CD4-positive, alpha-beta memory T cell (primary cell): ENCODE measurements at regions of chr14 and their contacts with region 1.

Region 1: GRCh38 chr14:56117765-56118610 is at the start of gene PELI2:
- DNase-seq: peak; percentile 86 to 91 (median 90)
- H3K4me3 ChIP-seq: peak within 1 kb of the TSS; percentile 45 to 72
- H3K4me3 Mint-ChIP-seq: peak within 1 kb of the TSS; percentile 94 to 99 (median 95)
- H3K27ac ChIP-seq: peak within 1 kb of the TSS; percentile 81
- H3K27ac Mint-ChIP-seq: peak within 1 kb of the TSS; percentile 97 to 99 (median 99)
- H3K4me1 ChIP-seq: peaks cover 39% of the 10 kb centered on the region
- H3K4me1 Mint-ChIP-seq: peaks cover 36 to 56% (median 43%) of the 10 kb centered on the region in 4 donors
- H3K27me3 ChIP-seq: no peaks in the 10 kb centered on the region
- H3K27me3 Mint-ChIP-seq: peaks cover 3 to 4% of the 10 kb centered on the region in 2 donors
- total RNA-seq, gene PELI2: 13.6 to 16.4 TPM

Region 2: GRCh38 chr14:55430024-55430690 is 687.8 kb before region 1 on chr14:
- CTCF ChIA-PET with region 1: no interaction called
- POLR2A ChIA-PET with region 1: no interaction called
- intact Hi-C with region 1: loop called (anchors 10 kb)
- DNase-seq: peak; percentile 65 to 79 (median 73)
- H3K4me3 ChIP-seq: no peak overlapping the region
- H3K4me3 Mint-ChIP-seq: peak overlapping the region in 1 of 8 donors; percentile 43
- H3K27ac ChIP-seq: no peak overlapping the region
- H3K27ac Mint-ChIP-seq: peak overlapping the region in 6 of 7 donors; percentile 39 to 91 (median 72)
- H3K4me1 ChIP-seq: peaks cover 32% of the 10 kb centered on the region
- H3K4me1 Mint-ChIP-seq: peaks cover 32 to 40% (median 34%) of the 10 kb centered on the region in 4 donors
- H3K27me3 ChIP-seq: no peaks in the 10 kb centered on the region
- H3K27me3 Mint-ChIP-seq: no peaks in the 10 kb centered on the region

Region 3: DNA sequence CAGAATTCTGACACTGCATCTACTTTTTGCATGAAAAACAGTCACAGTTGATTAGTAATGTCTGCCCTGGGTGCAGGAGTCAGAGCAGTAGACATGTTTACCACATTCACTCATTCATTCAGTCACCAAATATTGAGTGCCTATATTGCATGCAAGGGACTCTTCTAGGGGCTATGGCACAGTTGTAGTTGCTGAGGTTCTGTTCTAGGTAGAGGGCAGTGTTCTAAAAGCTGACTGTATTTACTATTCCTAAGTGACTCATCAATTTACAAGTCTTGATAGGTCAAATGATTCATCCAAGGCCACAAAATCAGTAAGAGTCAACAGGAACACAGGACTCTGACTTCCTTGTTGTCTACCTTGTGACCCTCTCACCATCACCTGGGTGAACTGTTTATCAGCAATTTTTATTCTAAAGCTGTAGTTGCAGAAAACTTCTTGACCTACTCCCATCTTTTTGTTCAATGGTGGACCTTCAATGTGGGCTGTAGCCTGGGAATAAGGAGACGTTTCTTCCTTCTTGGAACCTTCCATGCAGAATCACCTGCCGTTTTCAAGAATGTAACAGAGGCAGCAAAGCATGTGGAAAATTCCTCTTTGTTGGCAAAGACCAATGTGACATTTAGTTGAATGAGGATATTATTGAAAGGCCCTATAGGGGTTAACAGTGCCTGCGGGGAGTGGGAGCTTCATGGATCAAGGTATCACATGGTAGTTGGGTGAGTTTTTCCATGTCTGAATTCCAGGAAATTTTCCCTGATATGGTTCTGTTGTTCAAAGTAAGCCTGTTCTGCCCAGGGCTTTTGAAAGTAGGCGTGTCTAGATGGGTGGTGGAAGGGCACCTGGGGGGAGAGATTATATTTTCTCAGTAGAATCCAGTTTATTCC is 314.8 kb before region 1 on chr14:
- CTCF ChIA-PET with region 1: no interaction called
- POLR2A ChIA-PET with region 1: interaction called, 4 read pairs
- intact Hi-C with region 1: loop called (anchors 2 kb)
- DNase-seq: no peak
- H3K4me3 ChIP-seq: no peak overlapping the region
- H3K4me3 Mint-ChIP-seq: no peak overlapping the region
- H3K27ac ChIP-seq: no peak overlapping the region
- H3K27ac Mint-ChIP-seq: peak overlapping the region in 2 of 7 donors; percentile 57 to 65
- H3K4me1 ChIP-seq: peaks cover 50% of the 10 kb centered on the region
- H3K4me1 Mint-ChIP-seq: peaks cover 29 to 55% (median 46%) of the 10 kb centered on the region in 4 donors
- H3K27me3 ChIP-seq: no peaks in the 10 kb centered on the region
- H3K27me3 Mint-ChIP-seq: no peaks in the 10 kb centered on the region

Region 4: GRCh38 chr14:56004786-56005185 is 113.2 kb before region 1 on chr14:
- CTCF ChIA-PET with region 1: no interaction called
- POLR2A ChIA-PET with region 1: interaction called, 4 read pairs
- intact Hi-C with region 1: loop called (anchors 1 kb)
- DNase-seq: peak; percentile 29 to 51 (median 37)
- H3K4me3 ChIP-seq: no peak overlapping the region
- H3K4me3 Mint-ChIP-seq: peak overlapping the region in 7 of 8 donors; percentile 57 to 82 (median 63)
- H3K27ac ChIP-seq: no peak overlapping the region
- H3K27ac Mint-ChIP-seq: peak overlapping the region in 4 of 7 donors; percentile 10 to 87 (median 54)
- H3K4me1 ChIP-seq: peaks cover 35% of the 10 kb centered on the region
- H3K4me1 Mint-ChIP-seq: peaks cover 13 to 36% (median 25%) of the 10 kb centered on the region in 4 donors
- H3K27me3 ChIP-seq: peaks cover 3% of the 10 kb centered on the region
- H3K27me3 Mint-ChIP-seq: peaks cover 21 to 26% of the 10 kb centered on the region in 2 donors

Region 5: GRCh38 chr14:56579345-56580220 is 461.6 kb after region 1 on chr14 and contains the start of gene TMEM260:
- CTCF ChIA-PET with region 1: no interaction called
- POLR2A ChIA-PET with region 1: no interaction called
- intact Hi-C with region 1: loop called (anchors 5 kb)
- DNase-seq: peak; percentile 90 to 94 (median 93)
- H3K4me3 ChIP-seq: peak within 1 kb of the TSS; percentile 92 to 94
- H3K4me3 Mint-ChIP-seq: peak within 1 kb of the TSS; percentile 90 to 99 (median 92)
- H3K27ac ChIP-seq: peak within 1 kb of the TSS; percentile 83
- H3K27ac Mint-ChIP-seq: peak within 1 kb of the TSS in 6 of 7 donors; percentile 91 to 99 (median 97)
- H3K4me1 ChIP-seq: peaks cover 41% of the 10 kb centered on the region
- H3K4me1 Mint-ChIP-seq: peaks cover 30 to 48% (median 35%) of the 10 kb centered on the region in 4 donors
- H3K27me3 ChIP-seq: no peaks in the 10 kb centered on the region
- H3K27me3 Mint-ChIP-seq: no peaks in the 10 kb centered on the region
- total RNA-seq, gene TMEM260: 33.6 to 37.0 TPM

Region 6: GRCh38 chr14:57390028-57390805 is 1272.2 kb after region 1 on chr14 and contains the start of gene NAA30:
- CTCF ChIA-PET with region 1: no interaction called
- POLR2A ChIA-PET with region 1: interaction called, 4 read pairs
- intact Hi-C with region 1: loop called (anchors 2 kb)
- DNase-seq: peak; percentile 93 to 98 (median 96)
- H3K4me3 ChIP-seq: peak within 1 kb of the TSS; percentile 50 to 85
- H3K4me3 Mint-ChIP-seq: peak within 1 kb of the TSS; percentile 90 to 98 (median 94)
- H3K27ac ChIP-seq: peak within 1 kb of the TSS; percentile 83
- H3K27ac Mint-ChIP-seq: peak within 1 kb of the TSS; percentile 88 to 97 (median 96)
- H3K4me1 ChIP-seq: peaks cover 42% of the 10 kb centered on the region
- H3K4me1 Mint-ChIP-seq: peaks cover 30 to 53% (median 42%) of the 10 kb centered on the region in 4 donors
- H3K27me3 ChIP-seq: no peaks in the 10 kb centered on the region
- H3K27me3 Mint-ChIP-seq: no peaks in the 10 kb centered on the region
- total RNA-seq, gene NAA30: 18.6 to 21.8 TPM